ENCODE measurements at regions of chr21 and their contacts with region 1.

Region 1: DNA sequence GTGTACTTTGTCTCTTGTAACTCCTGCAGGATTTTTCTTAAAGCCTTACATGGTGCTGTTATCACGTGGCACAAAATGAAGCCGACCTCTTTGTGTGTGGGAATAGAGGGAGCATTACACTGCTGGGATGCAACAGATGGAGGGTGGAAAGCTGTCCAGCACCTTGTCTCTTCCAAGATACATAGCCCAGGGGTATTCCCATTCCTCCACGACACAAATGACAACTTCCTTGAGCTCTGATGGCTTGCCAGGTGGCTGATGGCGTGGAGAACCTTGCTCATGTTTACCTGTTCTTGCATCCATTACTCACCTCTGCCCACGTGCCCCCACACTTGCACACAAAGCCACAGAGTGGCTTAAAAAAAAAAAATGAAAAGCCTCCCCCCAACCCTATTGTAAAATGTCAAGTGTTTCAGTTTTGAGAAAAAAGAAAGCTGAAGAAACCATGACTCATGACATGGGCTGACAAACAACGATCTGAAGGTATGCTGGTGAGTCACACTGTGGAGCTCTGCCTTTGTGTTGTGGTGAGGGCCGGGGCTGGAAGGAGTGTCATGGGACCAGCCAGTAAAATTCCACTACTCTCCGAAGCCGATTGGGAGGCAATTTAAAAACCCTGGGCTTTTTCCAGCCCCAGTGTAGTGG is 32.0 kb upstream of the ATP5PO start:
- DNase-seq: no peak

Region 2: GRCh38 chr21:33866826-33867225 is 80.7 kb before region 1 on chr21:
- intact Hi-C with region 1: no loop called
- DNase-seq: no peak

Region 3: GRCh38 chr21:34004974-34005373 is 57.4 kb after region 1 on chr21:
- intact Hi-C with region 1: loop called in 1 of 2 experiments (anchors 10 kb)
- DNase-seq: no peak

Region 4: DNA sequence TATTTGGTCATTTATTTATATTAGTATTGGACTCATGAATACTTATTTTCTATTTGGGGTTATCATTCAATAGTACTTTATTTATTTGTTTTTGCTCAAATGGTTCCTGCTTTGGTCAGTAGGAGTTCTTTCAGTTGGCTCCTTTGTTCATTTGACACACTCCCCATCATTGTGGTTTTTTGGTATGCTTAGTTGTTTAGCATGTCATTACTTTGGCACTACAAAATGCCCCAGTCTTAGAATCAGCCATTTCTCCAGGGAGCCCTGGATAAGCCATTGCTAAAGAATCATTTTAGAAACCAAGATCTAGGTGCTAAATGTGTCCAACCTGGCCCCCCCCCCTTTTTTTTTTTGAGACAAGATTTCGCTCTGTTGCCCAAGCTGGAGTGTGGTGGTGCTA is 64.1 kb after region 1 on chr21:
- intact Hi-C with region 1: loop called (anchors 2 to 10 kb)
- DNase-seq: no peak

Region 5: DNA sequence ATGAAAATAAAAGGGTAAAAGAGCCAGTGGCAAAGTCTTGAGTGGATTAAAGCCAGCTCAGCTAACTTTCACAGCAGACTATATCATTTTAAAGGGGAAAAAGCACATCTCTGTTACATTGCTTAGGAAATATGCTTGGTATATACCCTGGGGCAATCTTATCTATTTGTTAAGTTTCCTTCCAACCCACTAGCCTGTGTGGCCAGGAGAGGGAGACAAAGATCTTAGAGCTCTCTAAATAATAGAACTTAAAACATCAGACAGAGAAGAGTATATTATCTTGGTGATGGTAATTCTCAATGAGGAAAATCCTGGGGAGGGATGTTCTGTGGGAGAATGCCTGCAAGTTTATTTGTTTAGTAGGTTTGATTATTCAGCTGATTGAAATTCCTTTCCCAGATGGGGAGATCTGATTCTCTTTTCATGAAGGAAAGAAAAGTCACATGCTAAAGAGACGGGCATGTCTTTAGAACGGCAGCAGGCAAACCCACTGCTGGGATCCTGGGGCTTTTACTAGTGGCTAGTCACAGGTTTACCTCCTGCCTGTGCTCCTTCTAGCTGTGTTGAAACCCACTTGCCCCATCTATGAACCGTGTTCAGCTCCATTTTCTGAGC is 419.9 kb after region 1 on chr21:
- intact Hi-C with region 1: no loop called
- DNase-seq: no peak